Breast epithelium (tissue), 4 donors: ENCODE measurements at regions of chr1 and their contacts with region 1.

Region 1: DNA sequence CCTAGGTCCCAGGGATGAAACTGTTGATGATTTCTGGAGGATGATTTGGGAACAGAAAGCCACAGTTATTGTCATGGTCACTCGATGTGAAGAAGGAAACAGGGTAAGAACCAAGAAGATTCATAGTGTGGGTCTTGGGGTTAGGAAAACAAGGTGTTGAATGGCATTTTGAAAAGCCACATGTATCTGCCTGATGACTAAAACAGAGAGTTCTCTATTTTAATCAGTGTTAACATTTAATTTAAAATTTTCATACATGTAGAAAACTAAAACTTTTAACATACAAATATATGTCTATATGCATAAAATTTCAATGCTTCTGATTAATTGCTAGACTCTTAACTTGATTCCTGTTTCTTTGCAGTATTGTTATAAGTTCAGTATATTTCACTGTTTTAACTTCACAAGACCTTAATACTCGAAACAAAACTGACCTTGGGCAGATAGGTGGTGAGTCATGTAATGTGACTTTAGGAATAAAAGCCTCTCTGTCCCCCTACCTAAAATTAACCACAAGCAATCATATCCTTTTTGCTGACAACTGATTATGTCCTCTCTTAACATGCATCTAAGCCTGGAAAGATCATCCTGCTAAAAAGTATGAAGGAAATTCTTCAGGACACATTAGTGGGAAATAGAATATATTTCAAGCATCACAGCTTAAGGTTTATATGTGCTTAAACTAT is 95.6 kb downstream of the PTPRC start:
- DNase-seq: no peak
- H3K4me3 ChIP-seq: no peak overlapping the region
- H3K27ac ChIP-seq: no peak overlapping the region
- H3K4me1 ChIP-seq: no peaks in the 10 kb centered on the region
- H3K27me3 ChIP-seq: no peaks in the 10 kb centered on the region
- CTCF ChIP-seq: no peak
- POLR2A ChIP-seq: no peak

Region 2: GRCh38 chr1:198778049-198778448 is 43.6 kb after region 1 on chr1:
- intact Hi-C with region 1: loop called (anchors 2 kb)
- DNase-seq: no peak
- H3K4me3 ChIP-seq: no peak overlapping the region
- H3K27ac ChIP-seq: no peak overlapping the region
- H3K4me1 ChIP-seq: no peaks in the 10 kb centered on the region
- H3K27me3 ChIP-seq: no peaks in the 10 kb centered on the region
- CTCF ChIP-seq: no peak
- POLR2A ChIP-seq: no peak